Mammary epithelial cell (primary cell): ENCODE measurements at regions of chrX and their contacts with region 1.

Region 1: DNA sequence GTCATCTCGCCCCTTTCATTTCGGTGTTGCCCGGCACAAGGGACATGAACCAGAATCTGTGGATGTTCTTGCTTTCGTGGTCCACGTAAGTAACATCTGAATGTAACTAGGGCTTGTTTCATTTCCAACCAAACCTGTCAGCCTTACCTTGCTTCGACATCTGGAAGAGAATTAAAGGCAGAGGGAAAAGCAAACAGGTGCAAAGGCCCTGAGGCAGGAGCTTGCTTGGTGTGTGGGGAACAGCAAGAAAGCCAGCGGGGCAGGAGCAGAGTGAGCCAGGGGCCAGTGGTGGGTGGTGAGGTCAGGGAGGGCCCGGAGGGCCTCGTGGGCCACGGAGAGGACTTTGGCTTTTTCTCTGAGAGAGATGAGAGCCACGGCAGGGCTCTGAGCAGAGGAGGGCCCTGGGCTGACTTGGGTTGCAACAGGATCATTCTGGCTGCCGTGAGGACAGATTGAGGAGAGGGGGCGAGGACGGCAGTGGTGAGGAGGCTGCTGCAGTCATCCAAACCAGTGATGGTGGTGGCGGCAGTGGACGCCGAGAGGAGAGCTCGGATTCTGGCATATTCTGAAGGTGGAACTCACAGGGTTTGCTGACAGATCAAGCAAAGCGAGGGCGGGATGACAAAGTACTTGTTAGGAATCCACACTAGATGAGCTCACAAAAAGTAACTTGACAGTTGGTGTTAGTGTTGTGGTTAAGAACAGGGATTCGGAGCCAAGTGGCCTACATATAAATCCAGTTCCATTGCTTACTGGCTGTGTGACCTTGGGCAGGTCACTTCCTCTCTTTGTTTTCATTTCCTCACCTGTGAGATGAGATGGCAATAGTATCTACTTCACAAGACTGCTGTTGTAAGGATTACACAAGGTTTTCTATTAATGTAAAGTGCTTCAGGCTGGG is 6.8 kb upstream of the WDR13 start:
- DNase-seq: no peak
- H3K4me3 ChIP-seq: no peak overlapping the region
- H3K27ac ChIP-seq: peak overlapping the region; percentile 61
- H3K4me1 ChIP-seq: peaks cover 17% of the 10 kb centered on the region
- H3K27me3 ChIP-seq: no peaks in the 10 kb centered on the region
- CTCF ChIP-seq: no peak

Region 2: DNA sequence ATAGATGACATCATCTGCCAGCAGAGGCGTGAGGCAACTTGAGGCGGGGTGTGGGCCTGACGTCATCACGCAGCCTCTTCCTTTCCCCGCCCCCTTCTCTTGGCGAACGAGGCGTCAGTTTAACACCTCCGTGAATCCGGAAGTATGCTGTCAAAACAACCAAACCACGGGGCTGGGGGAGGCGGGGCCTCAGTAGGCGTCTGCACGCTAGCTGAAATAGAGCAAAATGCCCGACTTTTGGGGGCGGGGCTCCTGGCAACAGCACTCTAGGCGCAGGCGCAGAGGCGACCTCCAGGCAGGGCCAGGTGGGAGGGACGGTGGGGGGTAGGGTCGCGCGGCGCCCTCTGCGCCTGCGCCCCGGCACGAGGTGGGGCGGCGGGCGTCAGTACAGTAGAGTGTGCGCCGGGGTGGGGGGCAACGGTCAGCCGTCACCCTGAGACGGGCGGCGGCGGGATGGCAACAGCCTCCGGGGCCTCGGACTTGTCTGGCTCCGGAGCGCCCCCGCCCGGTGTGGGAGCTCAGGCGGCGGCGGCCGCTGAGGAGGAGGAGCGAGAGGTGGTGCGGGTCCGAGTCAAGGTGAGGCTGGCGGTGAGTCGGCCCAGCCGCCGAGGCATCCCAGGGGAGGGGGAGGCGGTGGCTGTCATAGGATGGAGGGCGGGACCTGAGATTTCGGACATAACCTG is 51.0 kb before region 1 on chrX and contains the start of gene TBC1D25:
- CTCF ChIA-PET with region 1: no interaction called
- dilution Hi-C with region 1: no loop called
- in situ Hi-C with region 1: no loop called
- intact Hi-C with region 1: loop called (anchors 1 kb)
- DNase-seq: peak; percentile 93
- H3K4me3 ChIP-seq: peak within 1 kb of the TSS; percentile 54 to 59 (median 59)
- H3K27ac ChIP-seq: peak within 1 kb of the TSS; percentile 52
- H3K4me1 ChIP-seq: peaks cover 6% of the 10 kb centered on the region
- H3K27me3 ChIP-seq: no peaks in the 10 kb centered on the region
- CTCF ChIP-seq: peak; percentile 3 to 51
- total RNA-seq, gene TBC1D25: 14.7 to 16.7 TPM